CD8-positive, alpha-beta T cell (primary cell): ENCODE measurements at regions of chr1 and their contacts with region 1.

Region 1: DNA sequence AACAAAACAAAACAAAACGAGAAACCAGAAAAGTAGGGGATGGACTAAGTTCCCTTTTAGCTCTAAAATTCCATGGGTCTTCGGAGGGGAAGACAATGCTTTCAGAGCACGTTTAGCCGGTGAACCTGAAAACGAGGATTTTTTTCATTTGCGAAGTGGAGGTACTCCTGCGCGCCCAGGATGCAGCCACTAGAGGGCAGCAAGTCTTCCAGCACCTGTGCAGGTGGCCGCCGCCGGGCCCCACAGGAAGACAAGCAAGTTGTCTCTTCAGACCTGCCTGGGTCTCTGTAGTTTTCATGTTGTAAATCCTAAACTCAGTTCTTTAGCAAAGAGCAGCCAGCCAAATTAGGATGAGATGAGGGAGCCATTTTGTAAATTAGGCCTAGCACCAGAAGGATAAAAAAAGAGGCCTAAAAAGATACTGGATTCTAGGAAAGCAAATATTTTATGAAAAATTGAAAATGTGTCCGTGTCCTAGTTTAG is 17.7 kb upstream of the SNX27 start:
- DNase-seq: peak; percentile 72 to 91 (median 88)
- ATAC-seq: peak; percentile 99
- H3K4me3 ChIP-seq: no peak overlapping the region
- H3K4me3 Mint-ChIP-seq: peak overlapping the region; percentile 73
- H3K27ac ChIP-seq: no peak overlapping the region
- H3K27ac Mint-ChIP-seq: peak overlapping the region; percentile 56
- H3K4me1 ChIP-seq: peaks cover 6% of the 10 kb centered on the region
- H3K4me1 Mint-ChIP-seq: peaks cover 6% of the 10 kb centered on the region
- H3K27me3 ChIP-seq: no peaks in the 10 kb centered on the region
- H3K27me3 Mint-ChIP-seq: peaks cover 9% of the 10 kb centered on the region
- CTCF ChIP-seq: peak; percentile 93

Region 2: DNA sequence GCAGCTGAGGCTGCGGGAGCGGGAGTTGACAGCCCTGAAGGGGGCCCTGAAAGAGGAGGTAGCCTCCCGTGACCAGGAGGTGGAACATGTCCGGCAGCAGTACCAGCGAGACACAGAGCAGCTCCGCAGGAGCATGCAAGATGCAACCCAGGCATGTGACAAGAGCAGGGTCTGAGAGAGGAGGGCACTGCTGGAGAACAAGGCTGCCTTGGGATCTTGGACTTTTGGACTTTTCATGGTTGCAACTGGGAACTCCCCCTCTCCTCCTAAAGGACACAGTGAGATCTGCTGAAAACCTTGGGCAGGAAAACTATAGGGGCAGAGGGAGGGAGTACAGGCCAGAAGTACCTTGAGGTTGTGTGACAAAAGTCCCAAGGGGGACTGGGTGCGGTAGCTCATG is 69.4 kb before region 1 on chr1:
- CTCF ChIA-PET with region 1: no interaction called
- POLR2A ChIA-PET with region 1: no interaction called
- intact Hi-C with region 1: no loop called
- DNase-seq: no peak
- ATAC-seq: no peak
- H3K4me3 ChIP-seq: no peak overlapping the region
- H3K4me3 Mint-ChIP-seq: no peak overlapping the region
- H3K27ac ChIP-seq: no peak overlapping the region
- H3K27ac Mint-ChIP-seq: no peak overlapping the region
- H3K4me1 ChIP-seq: no peaks in the 10 kb centered on the region
- H3K4me1 Mint-ChIP-seq: no peaks in the 10 kb centered on the region
- H3K27me3 ChIP-seq: no peaks in the 10 kb centered on the region
- H3K27me3 Mint-ChIP-seq: no peaks in the 10 kb centered on the region
- CTCF ChIP-seq: no peak

Region 3: DNA sequence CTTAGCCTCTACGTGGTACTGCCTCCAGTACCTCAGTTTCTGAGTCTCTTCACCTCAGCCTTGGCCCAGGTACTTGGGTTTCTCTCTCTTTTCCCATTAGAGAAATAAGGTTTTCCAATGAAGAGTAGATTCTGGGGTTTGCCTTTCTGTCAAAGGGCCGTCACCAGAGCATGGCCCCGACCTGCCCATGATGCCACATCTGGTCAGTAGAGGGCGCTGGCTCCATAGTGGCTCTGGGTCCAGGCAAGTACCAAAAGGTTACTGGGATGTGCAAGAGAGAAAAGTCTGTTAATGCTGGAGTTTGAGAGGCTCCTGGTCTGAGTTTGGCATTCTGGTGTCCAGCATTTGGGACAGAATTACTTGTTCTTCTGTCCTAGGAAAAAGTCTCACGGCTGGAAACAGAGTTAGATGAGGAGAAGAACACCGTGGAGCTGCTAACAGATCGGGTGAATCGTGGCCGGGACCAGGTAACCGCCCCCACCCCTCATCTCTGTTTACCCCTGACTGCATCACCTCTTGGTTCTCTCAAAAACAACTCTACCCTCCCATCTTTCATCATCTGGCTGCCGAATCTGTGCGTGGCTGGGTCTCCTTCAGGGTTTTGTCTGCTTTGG is 59.4 kb before region 1 on chr1:
- CTCF ChIA-PET with region 1: interaction called, 4 read pairs
- POLR2A ChIA-PET with region 1: no interaction called
- intact Hi-C with region 1: loop called in 1 of 2 experiments (anchors 5 kb)
- DNase-seq: peak; percentile 58 to 83 (median 75)
- ATAC-seq: peak; percentile 88
- H3K4me3 ChIP-seq: no peak overlapping the region
- H3K4me3 Mint-ChIP-seq: no peak overlapping the region
- H3K27ac ChIP-seq: no peak overlapping the region
- H3K27ac Mint-ChIP-seq: no peak overlapping the region
- H3K4me1 ChIP-seq: peaks cover 6% of the 10 kb centered on the region
- H3K4me1 Mint-ChIP-seq: peaks cover 5% of the 10 kb centered on the region
- H3K27me3 ChIP-seq: no peaks in the 10 kb centered on the region
- H3K27me3 Mint-ChIP-seq: no peaks in the 10 kb centered on the region
- CTCF ChIP-seq: peak; percentile 82

Region 4: GRCh38 chr1:151606857-151607256 is 12.7 kb after region 1 on chr1:
- CTCF ChIA-PET with region 1: interaction called, 18 read pairs
- POLR2A ChIA-PET with region 1: interaction called, 6 read pairs
- intact Hi-C with region 1: loop called (anchors 1 kb)
- DNase-seq: no peak
- ATAC-seq: no peak
- H3K4me3 ChIP-seq: no peak overlapping the region
- H3K4me3 Mint-ChIP-seq: no peak overlapping the region
- H3K27ac ChIP-seq: no peak overlapping the region
- H3K27ac Mint-ChIP-seq: no peak overlapping the region
- H3K4me1 ChIP-seq: peaks cover 6% of the 10 kb centered on the region
- H3K4me1 Mint-ChIP-seq: peaks cover 4% of the 10 kb centered on the region
- H3K27me3 ChIP-seq: no peaks in the 10 kb centered on the region
- H3K27me3 Mint-ChIP-seq: peaks cover 13% of the 10 kb centered on the region
- CTCF ChIP-seq: no peak

Region 5: GRCh38 chr1:151619489-151620093 is 25.4 kb after region 1 on chr1:
- CTCF ChIA-PET with region 1: interaction called, 15 read pairs
- POLR2A ChIA-PET with region 1: no interaction called
- intact Hi-C with region 1: no loop called
- DNase-seq: no peak
- ATAC-seq: no peak
- H3K4me3 ChIP-seq: no peak overlapping the region
- H3K4me3 Mint-ChIP-seq: no peak overlapping the region
- H3K27ac ChIP-seq: no peak overlapping the region
- H3K27ac Mint-ChIP-seq: peak overlapping the region; percentile 52
- H3K4me1 ChIP-seq: no peaks in the 10 kb centered on the region
- H3K4me1 Mint-ChIP-seq: peaks cover 49% of the 10 kb centered on the region
- H3K27me3 ChIP-seq: no peaks in the 10 kb centered on the region
- H3K27me3 Mint-ChIP-seq: no peaks in the 10 kb centered on the region
- CTCF ChIP-seq: no peak

Region 6: DNA sequence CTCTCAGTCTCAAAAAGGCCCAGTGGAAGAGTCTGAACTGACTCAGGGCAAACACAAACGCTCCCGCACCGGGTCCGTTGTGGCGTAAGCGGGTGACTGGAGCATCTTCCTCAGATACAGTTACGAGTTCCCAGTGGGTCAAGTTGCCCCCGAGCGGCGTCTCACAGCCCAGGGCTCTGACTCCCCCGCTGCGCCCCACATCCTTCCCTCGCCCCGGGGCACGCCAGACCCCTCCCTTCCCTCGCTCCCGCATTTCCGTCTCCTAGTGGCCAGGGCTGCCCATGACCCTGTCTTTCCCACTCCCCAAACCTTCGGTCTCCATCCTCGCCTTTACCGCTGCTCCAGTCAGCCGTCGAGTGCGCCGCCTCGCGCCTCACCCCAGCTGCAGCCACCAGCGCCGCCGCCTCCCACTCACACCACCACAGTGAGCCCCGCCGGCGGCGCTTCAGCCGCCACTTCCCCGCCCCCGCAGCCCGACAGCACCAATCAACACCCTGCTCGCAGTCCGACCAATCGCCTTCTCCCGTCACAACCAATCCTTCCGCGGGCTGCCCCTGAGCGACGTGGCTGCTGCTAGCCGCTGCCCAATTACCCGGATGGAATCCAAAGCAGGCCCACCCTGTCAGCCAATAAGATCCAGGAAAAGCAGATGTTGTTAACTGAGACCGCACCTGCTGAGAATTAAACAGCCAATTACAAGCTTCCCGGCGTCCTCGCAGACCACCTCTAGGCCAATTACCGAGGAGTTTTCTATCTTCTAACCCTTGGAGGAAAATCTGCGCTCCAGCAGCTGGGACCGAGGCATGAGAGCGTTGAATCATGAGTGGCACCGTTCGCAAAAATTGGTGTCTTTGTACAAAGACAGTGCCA is 196.1 kb after region 1 on chr1 and contains the start of gene TDRKH:
- CTCF ChIA-PET with region 1: interaction called, 4 read pairs
- POLR2A ChIA-PET with region 1: no interaction called
- intact Hi-C with region 1: loop called in 1 of 2 experiments (anchors 1 kb)
- DNase-seq: peak; percentile 95 to 99 (median 97)
- ATAC-seq: peak; percentile 94
- H3K4me3 ChIP-seq: peak within 1 kb of the TSS; percentile 68 to 82
- H3K4me3 Mint-ChIP-seq: peak within 1 kb of the TSS; percentile 98
- H3K27ac ChIP-seq: peak within 1 kb of the TSS; percentile 29 to 37
- H3K27ac Mint-ChIP-seq: peak within 1 kb of the TSS; percentile 89
- H3K4me1 ChIP-seq: peaks cover 12% of the 10 kb centered on the region
- H3K4me1 Mint-ChIP-seq: peaks cover 30% of the 10 kb centered on the region
- H3K27me3 ChIP-seq: no peaks in the 10 kb centered on the region
- H3K27me3 Mint-ChIP-seq: no peaks in the 10 kb centered on the region
- CTCF ChIP-seq: no peak
- total RNA-seq, gene TDRKH: 3.6 to 3.9 TPM

Region 7: GRCh38 chr1:151839457-151840405 is 245.5 kb after region 1 on chr1 and contains the start of gene C2CD4D:
- CTCF ChIA-PET with region 1: interaction called, 32 read pairs
- POLR2A ChIA-PET with region 1: interaction called, 5 read pairs
- intact Hi-C with region 1: loop called in 1 of 2 experiments (anchors 1 kb)
- DNase-seq: peak; percentile 43 to 89 (median 67)
- ATAC-seq: peak; percentile 72
- H3K4me3 ChIP-seq: peak within 1 kb of the TSS; percentile 52
- H3K4me3 Mint-ChIP-seq: peak within 1 kb of the TSS; percentile 85
- H3K27ac ChIP-seq: peak within 1 kb of the TSS in 1 of 2 experiments; percentile 66
- H3K27ac Mint-ChIP-seq: peak within 1 kb of the TSS; percentile 88
- H3K4me1 ChIP-seq: peaks cover 37% of the 10 kb centered on the region
- H3K4me1 Mint-ChIP-seq: peaks cover 47% of the 10 kb centered on the region
- H3K27me3 ChIP-seq: peaks cover 0 to 3% of the 10 kb centered on the region in 2 experiments
- H3K27me3 Mint-ChIP-seq: no peaks in the 10 kb centered on the region
- CTCF ChIP-seq: no peak
- total RNA-seq, gene C2CD4D: 0.44 to 0.65 TPM

Region 8: GRCh38 chr1:152001391-152002249 is 407.4 kb after region 1 on chr1:
- CTCF ChIA-PET with region 1: interaction called, 4 read pairs
- POLR2A ChIA-PET with region 1: no interaction called
- intact Hi-C with region 1: loop called (anchors 5 kb)
- DNase-seq: peak; percentile 59 to 85 (median 79)
- ATAC-seq: peak; percentile 83
- H3K4me3 ChIP-seq: no peak overlapping the region
- H3K4me3 Mint-ChIP-seq: no peak overlapping the region
- H3K27ac ChIP-seq: no peak overlapping the region
- H3K27ac Mint-ChIP-seq: no peak overlapping the region
- H3K4me1 ChIP-seq: no peaks in the 10 kb centered on the region
- H3K4me1 Mint-ChIP-seq: no peaks in the 10 kb centered on the region
- H3K27me3 ChIP-seq: no peaks in the 10 kb centered on the region
- H3K27me3 Mint-ChIP-seq: peaks cover 8% of the 10 kb centered on the region
- CTCF ChIP-seq: peak; percentile 91